Cardiac septum (tissue), 1 donor: ENCODE measurements at regions of chr1 and their contacts with region 1.

Region 1: DNA sequence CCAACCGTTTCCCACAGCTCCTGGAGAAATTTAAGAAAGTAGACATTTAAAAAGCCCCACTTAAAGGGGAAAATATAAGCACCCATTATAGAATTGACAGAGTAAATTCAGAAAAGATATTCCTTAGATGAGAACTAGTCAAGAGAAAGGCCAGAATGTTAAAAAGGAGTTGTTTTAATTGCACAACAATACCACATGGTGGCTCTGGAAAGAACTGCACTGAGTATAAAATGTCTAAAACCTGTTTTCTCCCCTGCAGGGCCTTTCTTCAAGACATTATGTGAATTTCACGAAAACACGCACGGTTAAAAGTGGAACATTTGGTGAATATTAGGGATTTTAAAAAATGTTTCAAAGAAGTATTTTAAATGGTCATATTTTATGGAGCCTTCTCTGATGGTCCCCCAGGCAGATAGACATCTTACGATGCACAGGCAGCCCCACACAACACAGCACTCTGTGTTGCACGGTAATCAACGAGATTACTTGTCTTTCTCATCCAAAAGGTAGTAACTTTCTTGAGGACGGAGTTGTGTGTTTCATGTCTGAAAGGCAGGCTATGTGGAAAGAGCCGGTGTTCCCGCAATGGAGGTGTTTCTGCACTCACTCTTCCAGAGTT is 101.9 kb downstream of the PRRX1 start:
- DNase-seq: no peak

Region 2: GRCh38 chr1:169928438-169929209 is 837.2 kb before region 1 on chr1:
- intact Hi-C with region 1: loop called (anchors 10 kb)
- DNase-seq: no peak

Region 3: DNA sequence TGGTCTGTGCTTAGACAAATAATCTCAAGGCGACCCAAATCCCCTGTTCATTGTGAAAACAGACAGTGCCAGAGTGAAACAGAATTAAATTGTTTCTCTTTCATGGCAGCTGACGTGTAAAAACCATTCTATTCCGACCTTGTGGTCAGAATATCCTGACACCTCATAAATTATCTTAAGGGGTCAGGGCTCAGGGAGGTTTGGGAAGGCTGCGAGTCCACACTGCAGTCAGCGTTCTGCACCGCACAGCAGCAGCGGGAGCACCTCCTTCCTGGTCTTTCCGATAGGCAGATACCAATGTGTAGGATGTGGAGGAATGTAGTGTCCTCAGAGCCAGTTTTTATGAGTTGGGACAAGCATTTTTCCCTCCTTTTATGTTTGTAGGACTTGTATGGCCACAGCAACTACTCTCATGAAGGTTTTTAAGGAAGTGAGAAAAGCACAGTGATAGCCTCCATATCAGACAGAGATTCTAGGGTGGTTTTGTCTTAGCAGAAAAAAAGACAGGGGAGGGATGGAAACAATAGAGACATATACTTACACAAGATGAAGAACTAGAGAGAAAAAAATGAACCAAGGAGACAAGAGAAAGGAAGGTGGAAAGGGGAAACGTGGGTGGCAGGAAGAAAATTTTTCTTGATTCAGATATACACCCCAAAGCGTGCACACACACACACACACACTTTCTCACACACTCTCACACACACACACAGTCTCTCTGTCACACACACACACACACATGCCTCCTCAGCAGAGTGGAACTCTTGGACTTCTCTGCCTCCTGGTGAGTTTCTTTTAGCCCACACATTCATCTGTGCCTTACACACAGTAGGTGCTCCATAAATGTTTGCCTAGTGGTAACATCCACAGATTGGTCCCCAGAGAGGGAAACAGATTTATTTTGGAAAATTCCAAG is 551.4 kb before region 1 on chr1:
- intact Hi-C with region 1: loop called (anchors 10 kb)
- DNase-seq: no peak

Region 4: GRCh38 chr1:170471398-170472053 is 294.3 kb before region 1 on chr1:
- intact Hi-C with region 1: loop called (anchors 10 kb)
- DNase-seq: no peak

Region 5: DNA sequence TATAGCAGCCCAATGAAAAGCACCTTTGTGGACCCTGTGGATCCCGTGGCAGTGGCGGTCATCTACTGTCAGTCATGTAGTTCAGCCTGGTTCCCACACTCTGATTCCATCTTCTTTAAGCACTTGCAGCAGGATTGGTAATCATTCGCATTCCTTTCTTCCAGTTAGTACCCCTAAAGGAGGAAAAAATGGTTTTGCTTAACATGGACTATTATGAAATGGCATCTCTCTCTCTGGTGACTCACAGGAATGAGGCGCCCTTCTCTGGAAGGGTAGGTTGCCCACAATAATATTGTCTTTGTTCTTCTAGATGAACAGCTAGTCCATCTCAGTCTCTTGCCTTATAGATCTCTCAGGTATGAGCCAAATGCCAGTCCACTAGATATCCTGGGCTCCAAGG is 41.6 kb after region 1 on chr1:
- intact Hi-C with region 1: no loop called
- DNase-seq: no peak